ENCODE measurements at regions of chr9 and their contacts with region 1.

Region 1: GRCh38 chr9:127734747-127735529 is at the start of gene TOR2A:
- DNase-seq: peak; percentile 99
- ATAC-seq: peak; percentile 93
- H3K4me3 Mint-ChIP-seq: peak within 1 kb of the TSS; percentile 72
- H3K27ac Mint-ChIP-seq: peak within 1 kb of the TSS; percentile 73
- H3K4me1 Mint-ChIP-seq: peaks cover 12% of the 10 kb centered on the region
- H3K27me3 Mint-ChIP-seq: no peaks in the 10 kb centered on the region
- total RNA-seq, gene TOR2A: 11.3 to 14.0 TPM

Region 2: DNA sequence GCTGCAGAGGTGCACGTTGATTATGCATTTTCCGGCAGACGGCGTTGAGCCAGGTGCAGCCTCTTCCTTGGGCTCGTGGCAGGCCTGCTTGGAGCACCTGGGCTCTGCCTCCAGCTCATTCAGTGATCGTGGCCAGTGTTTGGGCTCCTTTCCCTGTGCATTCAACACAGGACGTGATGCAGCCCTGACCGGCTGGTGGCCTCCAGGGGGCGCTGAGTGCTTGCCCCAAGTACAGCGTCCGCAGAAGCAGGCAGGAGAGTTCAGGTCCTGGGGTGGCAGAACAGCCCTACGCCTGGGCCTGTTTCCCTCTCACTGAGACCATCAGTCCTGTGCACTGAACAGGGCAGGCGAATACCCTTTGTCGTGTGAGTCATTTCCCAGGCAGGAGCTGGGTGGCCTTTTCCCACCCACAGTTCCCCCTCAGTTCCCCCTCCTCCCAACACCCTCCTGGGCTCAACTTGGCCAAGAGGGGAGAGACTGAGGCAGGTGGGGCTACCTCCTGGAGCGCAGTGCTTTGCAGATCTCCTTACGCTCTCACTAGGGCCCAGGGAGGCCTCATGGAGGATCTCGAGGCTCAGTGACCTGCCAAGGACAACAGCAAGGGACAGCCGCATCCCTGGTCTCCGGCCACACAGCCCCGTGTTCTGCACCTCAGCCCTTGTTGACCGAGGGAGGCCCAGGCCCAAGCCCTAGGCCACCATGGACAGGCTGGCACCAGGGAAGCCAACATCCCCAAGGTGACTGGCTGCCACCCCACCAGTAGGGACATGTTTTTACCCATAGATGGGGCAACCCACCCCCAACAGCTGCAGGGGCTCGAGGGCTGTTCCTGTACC is 230.8 kb before region 1 on chr9:
- CTCF ChIA-PET with region 1: interaction called, 16 read pairs
- POLR2A ChIA-PET with region 1: no interaction called
- intact Hi-C with region 1: loop called (anchors 1 to 2 kb)
- DNase-seq: peak; percentile 89
- ATAC-seq: peak; percentile 90
- H3K4me3 Mint-ChIP-seq: no peak overlapping the region
- H3K27ac Mint-ChIP-seq: no peak overlapping the region
- H3K4me1 Mint-ChIP-seq: no peaks in the 10 kb centered on the region
- H3K27me3 Mint-ChIP-seq: no peaks in the 10 kb centered on the region

Region 3: DNA sequence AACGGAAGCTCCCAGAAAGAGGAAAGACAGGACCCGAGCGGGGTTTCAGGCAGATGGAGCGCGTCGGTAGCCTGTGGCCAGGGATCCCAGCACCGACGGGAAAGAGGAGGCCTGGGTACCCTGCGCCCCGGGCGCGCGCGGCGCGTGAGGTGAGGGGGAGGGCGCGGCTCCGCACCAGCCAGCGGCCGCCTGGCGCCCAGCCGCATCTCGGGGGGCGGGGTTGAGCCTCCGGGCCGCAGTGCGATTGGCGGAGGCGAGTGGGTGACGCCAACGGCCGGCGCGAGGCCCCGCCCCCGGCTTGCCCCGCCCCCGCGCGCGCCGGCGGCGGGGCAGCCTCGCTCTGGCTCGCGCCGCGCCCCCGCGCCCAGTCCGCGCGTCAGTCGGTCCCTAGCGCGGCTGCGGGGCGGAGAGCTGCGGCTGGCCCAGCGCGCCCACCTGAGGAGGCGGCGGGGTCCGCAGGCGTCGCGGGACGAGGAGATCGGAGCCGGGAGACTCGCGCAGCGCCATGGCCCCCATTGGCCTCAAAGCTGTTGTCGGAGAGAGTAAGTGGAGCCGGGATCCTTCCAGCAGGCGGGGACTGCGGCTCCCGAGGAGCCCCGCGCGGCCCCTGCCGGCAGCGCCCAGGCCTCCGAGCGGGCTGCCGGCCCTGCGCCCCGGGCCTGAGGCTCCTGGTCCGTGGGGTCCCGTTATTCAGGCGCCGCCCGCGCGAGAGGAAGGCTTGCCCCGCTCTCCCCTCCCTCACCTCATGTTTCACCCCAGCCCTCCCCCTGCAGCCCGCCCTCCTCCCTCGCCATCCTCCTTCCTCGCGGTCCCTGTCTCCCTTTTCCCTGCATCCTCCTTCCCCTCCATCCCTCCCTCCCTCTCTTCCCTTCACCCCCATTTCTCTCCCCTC is 122.8 kb before region 1 on chr9 and contains the start of gene STXBP1:
- CTCF ChIA-PET with region 1: interaction called, 4 read pairs
- POLR2A ChIA-PET with region 1: interaction called, 3 read pairs
- intact Hi-C with region 1: loop called in 1 of 2 experiments (anchors 1 kb)
- DNase-seq: peak; percentile 92
- ATAC-seq: peak; percentile 87
- H3K4me3 Mint-ChIP-seq: peak within 1 kb of the TSS; percentile 85
- H3K27ac Mint-ChIP-seq: peak within 1 kb of the TSS; percentile 71
- H3K4me1 Mint-ChIP-seq: peaks cover 26% of the 10 kb centered on the region
- H3K27me3 Mint-ChIP-seq: peaks cover 32% of the 10 kb centered on the region
- total RNA-seq, gene STXBP1: 15.9 to 18.1 TPM

Region 4: DNA sequence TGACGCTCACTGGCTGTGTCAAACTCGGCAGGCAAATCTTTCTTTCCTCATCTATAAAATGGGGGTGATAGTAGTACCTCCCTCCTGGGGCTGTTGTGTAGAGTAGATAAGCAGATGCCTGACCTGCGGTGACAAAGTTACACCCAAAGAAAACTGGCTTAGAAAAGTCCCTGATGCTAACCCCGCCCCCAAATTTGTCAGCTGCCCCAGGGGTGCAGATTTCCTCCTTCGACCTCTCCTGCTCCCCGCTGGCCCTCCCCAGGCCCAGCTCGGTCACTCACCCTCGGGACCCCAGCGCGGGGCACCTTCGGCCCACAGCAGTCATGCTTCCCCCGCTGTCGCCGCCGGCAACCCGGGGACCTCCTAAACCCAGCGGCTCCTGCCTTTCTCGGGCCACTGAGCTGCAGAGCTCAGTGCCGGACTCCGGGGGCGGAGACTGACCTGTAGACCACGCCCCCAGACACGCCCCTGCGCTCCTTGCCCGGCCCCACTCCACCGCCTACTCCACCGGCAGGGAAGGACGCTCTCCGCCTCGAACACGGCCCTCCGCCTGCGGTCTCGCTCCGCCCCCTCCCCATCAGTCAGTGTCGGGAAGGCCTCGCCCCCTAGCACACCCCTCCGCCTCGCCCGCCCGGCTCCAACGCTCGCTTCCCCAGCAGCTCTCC is 36.1 kb after region 1 on chr9:
- CTCF ChIA-PET with region 1: interaction called, 16 read pairs
- POLR2A ChIA-PET with region 1: interaction called, 5 read pairs
- intact Hi-C with region 1: loop called in 1 of 2 experiments (anchors 1 kb)
- DNase-seq: peak; percentile 99
- ATAC-seq: peak; percentile 95
- H3K4me3 Mint-ChIP-seq: peak overlapping the region; percentile 80
- H3K27ac Mint-ChIP-seq: peak overlapping the region; percentile 80
- H3K4me1 Mint-ChIP-seq: peaks cover 59% of the 10 kb centered on the region
- H3K27me3 Mint-ChIP-seq: no peaks in the 10 kb centered on the region

Region 5: GRCh38 chr9:127802576-127803443 is 67.9 kb after region 1 on chr9 and contains the start of gene FPGS:
- CTCF ChIA-PET with region 1: interaction called, 5 read pairs
- POLR2A ChIA-PET with region 1: no interaction called
- intact Hi-C with region 1: loop called in 1 of 2 experiments (anchors 1 kb)
- DNase-seq: peak; percentile 93
- ATAC-seq: peak; percentile 86
- H3K4me3 Mint-ChIP-seq: peak within 1 kb of the TSS; percentile 98
- H3K27ac Mint-ChIP-seq: peak within 1 kb of the TSS; percentile 95
- H3K4me1 Mint-ChIP-seq: peaks cover 26% of the 10 kb centered on the region
- H3K27me3 Mint-ChIP-seq: no peaks in the 10 kb centered on the region
- total RNA-seq, gene FPGS: 71.9 to 80.4 TPM

Region 6: DNA sequence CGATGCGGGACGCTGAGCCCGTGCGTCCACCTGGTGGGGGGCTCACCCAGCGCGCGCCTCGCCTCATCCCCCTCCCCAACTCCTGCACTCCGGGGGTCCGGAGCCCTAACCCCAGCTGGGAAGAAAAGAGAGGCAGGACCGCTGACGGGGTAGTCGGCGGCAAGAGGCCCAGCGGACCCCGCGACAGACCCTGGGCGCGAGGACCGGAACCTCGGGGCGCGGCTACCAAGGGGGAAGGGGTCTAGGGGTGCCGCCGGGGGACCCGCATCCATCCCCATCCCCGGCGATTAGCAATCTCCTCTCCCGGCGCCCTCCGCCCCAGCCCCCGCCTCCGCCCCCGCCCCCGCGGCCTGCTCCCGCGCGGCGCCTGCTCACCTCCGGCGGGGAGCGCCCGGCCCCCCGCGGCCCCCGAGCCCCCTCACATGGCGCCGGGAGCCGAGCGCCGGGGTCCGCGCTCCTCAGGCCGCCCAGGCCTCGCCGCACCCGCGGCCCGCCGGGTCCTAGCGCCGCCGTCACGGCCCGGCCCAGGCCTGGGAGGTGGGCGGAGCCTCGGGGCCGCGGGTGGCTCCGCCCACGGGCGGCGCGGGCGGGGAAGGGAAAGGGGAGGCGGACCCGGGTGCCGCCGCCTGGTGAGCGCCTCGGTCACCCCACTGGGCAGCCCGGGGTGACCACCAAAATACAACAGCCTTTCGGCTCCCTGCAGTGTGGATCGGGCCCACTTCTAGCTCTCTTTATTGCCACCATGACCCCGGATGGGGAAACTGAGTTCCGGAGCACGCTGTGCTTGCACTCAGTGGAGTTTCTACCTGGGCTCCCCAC is 164.4 kb after region 1 on chr9 and contains the start of gene ST6GALNAC6:
- CTCF ChIA-PET with region 1: interaction called, 4 read pairs
- POLR2A ChIA-PET with region 1: no interaction called
- intact Hi-C with region 1: loop called in 1 of 2 experiments (anchors 1 kb)
- DNase-seq: peak; percentile 85
- ATAC-seq: peak; percentile 69
- H3K4me3 Mint-ChIP-seq: peak within 1 kb of the TSS; percentile 82
- H3K27ac Mint-ChIP-seq: peak within 1 kb of the TSS; percentile 87
- H3K4me1 Mint-ChIP-seq: peaks cover 35% of the 10 kb centered on the region
- H3K27me3 Mint-ChIP-seq: no peaks in the 10 kb centered on the region
- total RNA-seq, gene ST6GALNAC6: 46.3 to 63.3 TPM

Region 7: DNA sequence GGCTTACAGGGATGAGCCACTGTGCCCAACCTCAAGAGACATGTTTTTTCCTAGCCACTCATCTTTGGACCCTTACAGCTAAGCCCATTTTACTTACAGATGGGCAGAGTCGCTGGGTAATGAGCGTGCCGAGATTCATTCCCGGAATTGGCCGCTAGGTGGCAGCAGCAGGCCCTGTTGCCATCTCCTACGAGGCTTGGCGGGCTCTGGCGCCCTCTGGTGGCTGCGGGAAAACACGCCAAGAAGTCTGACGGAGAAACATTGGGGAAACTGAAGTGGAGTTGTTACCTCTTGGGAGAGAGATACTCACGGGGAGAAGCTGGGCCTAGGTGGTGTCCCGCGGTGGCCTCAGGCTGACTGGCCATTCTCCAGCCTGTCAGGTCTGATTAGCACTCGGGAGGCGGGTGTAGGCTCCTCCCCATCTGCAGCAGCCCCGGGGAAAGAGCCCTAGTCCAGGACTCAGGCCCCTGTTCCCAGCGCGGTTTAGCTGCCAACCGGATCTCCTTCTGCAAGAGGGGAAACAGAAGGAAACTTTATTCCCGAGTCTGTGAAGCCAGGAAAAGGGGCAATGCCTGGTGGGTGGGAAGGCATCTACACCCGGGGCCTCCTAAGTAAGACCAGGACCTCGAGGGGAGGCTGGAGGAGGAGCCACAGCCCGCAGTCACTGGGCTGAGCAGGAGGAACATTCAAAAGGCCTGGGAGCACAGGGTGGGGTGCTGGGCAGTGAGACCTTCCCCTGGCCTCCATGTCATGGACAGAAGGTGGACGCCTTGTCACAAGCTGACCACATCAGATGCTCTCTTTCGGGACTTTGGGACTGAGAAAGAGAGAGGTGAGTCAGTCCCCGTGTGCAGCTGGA is 382.9 kb after region 1 on chr9:
- CTCF ChIA-PET with region 1: no interaction called
- POLR2A ChIA-PET with region 1: no interaction called
- intact Hi-C with region 1: no loop called
- DNase-seq: peak; percentile 99
- ATAC-seq: peak; percentile 94
- H3K4me3 Mint-ChIP-seq: no peak overlapping the region
- H3K27ac Mint-ChIP-seq: no peak overlapping the region
- H3K4me1 Mint-ChIP-seq: peaks cover 5% of the 10 kb centered on the region
- H3K27me3 Mint-ChIP-seq: no peaks in the 10 kb centered on the region

Measured in activated CD4-positive, alpha-beta T cell treated with anti-CD3 and anti-CD28 coated beads for 36 hours (primary cell).